GM12878 (cell line): ENCODE measurements at regions of chr22 and their contacts with region 1.

Region 1: DNA sequence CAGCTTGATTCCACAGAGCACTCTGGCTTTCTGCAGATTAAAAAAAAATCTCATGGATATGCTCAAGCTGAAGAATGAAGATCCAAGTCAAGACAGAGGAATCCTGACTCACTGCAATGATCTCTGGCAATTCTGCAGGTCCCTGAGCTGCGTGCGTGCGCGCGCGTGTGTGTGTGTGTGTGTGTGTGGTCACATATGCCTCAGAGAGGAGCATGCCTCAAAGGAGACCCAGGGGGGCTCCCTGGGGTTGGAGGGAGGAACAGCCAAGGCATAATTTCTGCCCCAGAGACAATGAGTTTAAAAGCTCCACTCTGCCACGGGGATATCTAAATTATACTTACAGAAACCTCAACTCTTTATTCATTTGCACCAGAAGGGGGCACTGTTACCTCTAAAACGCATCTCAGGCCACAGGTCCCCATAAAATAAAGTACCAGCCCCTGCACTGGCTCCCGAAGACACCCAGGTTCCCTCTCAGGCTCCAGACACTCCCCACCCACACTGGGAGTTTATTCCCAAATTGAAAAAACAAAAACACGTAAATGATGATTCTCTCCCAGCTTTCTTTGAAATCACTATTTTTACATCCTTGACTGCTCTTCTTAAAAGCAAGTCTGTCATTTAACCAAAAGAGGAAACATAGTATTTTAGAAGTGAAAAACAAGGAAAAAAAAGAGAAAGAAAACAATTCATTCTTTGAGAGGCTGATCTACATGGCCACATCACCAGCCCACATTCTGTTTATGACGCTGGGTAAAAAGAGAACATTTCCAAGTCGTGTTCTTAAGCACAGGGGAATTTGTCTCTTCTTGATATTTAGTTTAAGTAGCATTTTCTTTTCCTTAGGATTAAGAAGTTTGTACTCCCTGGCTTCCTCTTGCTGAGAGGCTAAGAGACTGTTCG is 401.0 kb downstream of the LARGE1 start:
- DNase-seq: peak; percentile 37
- ATAC-seq: peak; percentile 78
- H3K4me3 ChIP-seq: no peak overlapping the region
- H3K27ac ChIP-seq: peak overlapping the region; percentile 45; the same call in 1 of the 2 replicates
- H3K4me1 ChIP-seq: peaks cover 27% of the 10 kb centered on the region
- H3K27me3 ChIP-seq: no peaks in the 10 kb centered on the region
- CTCF ChIP-seq: peak; percentile 50 to 61 (median 50)
- EP300 ChIP-seq: no peak
- POLR2A ChIP-seq: no peak
- RAD21 ChIP-seq: peak; percentile 86

Region 2: GRCh38 chr22:33335611-33336279 is 183.6 kb before region 1 on chr22:
- CTCF ChIA-PET with region 1: no interaction called
- POLR2A ChIA-PET with region 1: no interaction called
- RAD21 ChIA-PET with region 1: no interaction called
- SMC1A ChIA-PET with region 1: no interaction called
- in situ Hi-C with region 1: no loop called
- intact Hi-C with region 1: no loop called
- DNase-seq: no peak
- ATAC-seq: no peak
- H3K4me3 ChIP-seq: no peak overlapping the region
- H3K27ac ChIP-seq: no peak overlapping the region
- H3K4me1 ChIP-seq: no peaks in the 10 kb centered on the region
- H3K27me3 ChIP-seq: no peaks in the 10 kb centered on the region
- CTCF ChIP-seq: no peak
- EP300 ChIP-seq: no peak
- POLR2A ChIP-seq: no peak
- RAD21 ChIP-seq: no peak

Region 3: DNA sequence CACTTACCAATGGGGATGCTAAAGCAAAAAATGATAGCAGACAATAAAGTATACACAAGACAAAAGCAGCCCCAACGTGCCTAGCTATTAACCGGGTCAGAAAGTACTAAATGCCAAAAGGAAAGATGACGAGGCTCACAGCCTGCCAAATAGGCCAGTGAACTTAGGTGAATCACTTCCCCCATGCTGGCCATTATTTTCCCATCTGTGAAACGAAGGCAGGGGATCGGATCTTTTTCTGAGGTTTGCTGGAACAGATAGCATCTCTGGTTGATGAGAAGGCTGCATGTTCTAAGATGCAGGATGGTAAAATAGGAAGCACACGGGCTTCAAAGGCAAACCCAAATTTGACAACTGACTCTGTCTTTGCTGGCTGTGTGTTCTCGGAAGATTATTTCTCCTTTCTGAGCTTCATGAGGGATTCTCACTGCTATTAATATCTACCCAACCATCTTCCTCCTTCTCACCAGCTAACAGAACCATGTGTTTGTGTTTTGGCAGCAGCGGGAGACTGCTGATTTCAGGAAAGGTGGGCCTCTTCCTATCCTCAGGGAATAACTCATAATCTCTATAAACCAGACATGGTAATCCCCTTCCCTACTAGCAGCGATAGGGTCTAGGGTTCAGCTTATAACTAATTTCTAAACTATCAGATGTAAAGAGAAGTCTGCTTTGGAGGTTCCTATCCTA is 10.2 kb after region 1 on chr22:
- CTCF ChIA-PET with region 1: interaction called, 11 read pairs
- POLR2A ChIA-PET with region 1: no interaction called
- RAD21 ChIA-PET with region 1: interaction called, 6 read pairs
- SMC1A ChIA-PET with region 1: interaction called, 5 read pairs
- in situ Hi-C with region 1: no loop called
- intact Hi-C with region 1: no loop called
- DNase-seq: no peak
- ATAC-seq: no peak
- H3K4me3 ChIP-seq: no peak overlapping the region
- H3K27ac ChIP-seq: no peak overlapping the region
- H3K4me1 ChIP-seq: no peaks in the 10 kb centered on the region
- H3K27me3 ChIP-seq: no peaks in the 10 kb centered on the region
- CTCF ChIP-seq: no peak
- EP300 ChIP-seq: no peak
- POLR2A ChIP-seq: no peak
- RAD21 ChIP-seq: no peak

Region 4: GRCh38 chr22:33573479-33573878 is 54.2 kb after region 1 on chr22:
- CTCF ChIA-PET with region 1: interaction called, 138 read pairs
- POLR2A ChIA-PET with region 1: no interaction called
- RAD21 ChIA-PET with region 1: interaction called, 31 read pairs
- SMC1A ChIA-PET with region 1: interaction called, 125 read pairs
- in situ Hi-C with region 1: loop called (anchors 5 kb)
- intact Hi-C with region 1: no loop called
- DNase-seq: no peak
- ATAC-seq: peak; percentile 33
- H3K4me3 ChIP-seq: no peak overlapping the region
- H3K27ac ChIP-seq: no peak overlapping the region
- H3K4me1 ChIP-seq: peaks cover 20% of the 10 kb centered on the region
- H3K27me3 ChIP-seq: no peaks in the 10 kb centered on the region
- CTCF ChIP-seq: no peak
- EP300 ChIP-seq: no peak
- POLR2A ChIP-seq: no peak
- RAD21 ChIP-seq: no peak

Region 5: GRCh38 chr22:34105461-34106062 is 586.2 kb after region 1 on chr22:
- CTCF ChIA-PET with region 1: interaction called, 3 read pairs
- POLR2A ChIA-PET with region 1: no interaction called
- RAD21 ChIA-PET with region 1: no interaction called
- SMC1A ChIA-PET with region 1: no interaction called
- in situ Hi-C with region 1: no loop called
- intact Hi-C with region 1: loop called (anchors 5 kb)
- DNase-seq: no peak
- ATAC-seq: no peak
- H3K4me3 ChIP-seq: no peak overlapping the region
- H3K27ac ChIP-seq: no peak overlapping the region
- H3K4me1 ChIP-seq: no peaks in the 10 kb centered on the region
- H3K27me3 ChIP-seq: no peaks in the 10 kb centered on the region
- CTCF ChIP-seq: peak; percentile 38 to 63 (median 52); a peak in 5 of 6 replicates
- EP300 ChIP-seq: no peak
- POLR2A ChIP-seq: no peak
- RAD21 ChIP-seq: peak; percentile 50

Region 6: DNA sequence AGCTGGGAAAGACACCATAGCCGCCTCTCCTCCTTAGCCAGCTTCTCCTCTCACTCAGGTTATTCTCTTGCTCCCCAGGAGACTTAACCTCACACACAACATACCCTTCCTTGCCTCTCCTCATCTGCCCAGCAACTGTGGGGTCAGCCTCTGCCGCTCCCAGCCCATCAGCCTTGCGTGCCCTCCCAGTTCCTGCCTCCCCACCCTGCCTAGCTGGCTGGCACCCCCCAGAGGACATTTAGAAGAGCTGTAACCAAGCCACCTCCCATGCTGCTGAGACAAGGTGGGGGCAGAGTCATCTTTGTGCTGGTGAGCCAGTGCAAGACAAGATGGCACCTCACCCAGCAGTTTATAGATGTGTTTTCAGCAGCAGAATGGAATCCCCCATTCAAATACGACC is 1818.6 kb after region 1 on chr22:
- CTCF ChIA-PET with region 1: no interaction called
- POLR2A ChIA-PET with region 1: no interaction called
- RAD21 ChIA-PET with region 1: no interaction called
- SMC1A ChIA-PET with region 1: no interaction called
- in situ Hi-C with region 1: no loop called
- intact Hi-C with region 1: no loop called
- DNase-seq: no peak
- ATAC-seq: peak; percentile 75
- H3K4me3 ChIP-seq: no peak overlapping the region
- H3K27ac ChIP-seq: no peak overlapping the region
- H3K4me1 ChIP-seq: no peaks in the 10 kb centered on the region; the same call in 1 of the 2 replicates
- H3K27me3 ChIP-seq: no peaks in the 10 kb centered on the region
- CTCF ChIP-seq: peak; percentile 31 to 34 (median 32); a peak in 3 of 6 replicates
- EP300 ChIP-seq: no peak
- POLR2A ChIP-seq: no peak
- RAD21 ChIP-seq: peak; percentile 56